Endothelial cell of umbilical vein (primary cell): ENCODE measurements at regions of chr19 and their contacts with region 1.

Region 1: GRCh38 chr19:1173845-1174809 is at the start of gene SBNO2:
- DNase-seq: peak; percentile 89
- H3K4me3 ChIP-seq: peak within 1 kb of the TSS; percentile 68 to 95 (median 73)
- H3K27ac ChIP-seq: peak within 1 kb of the TSS; percentile 42
- H3K4me1 ChIP-seq: peaks cover 12% of the 10 kb centered on the region
- H3K27me3 ChIP-seq: no peaks in the 10 kb centered on the region
- CTCF ChIP-seq: no peak
- POLR2A ChIP-seq: peak; percentile 95
- total RNA-seq, gene SBNO2: 63.8 and 65.7 TPM in 2 replicates

Region 2: GRCh38 chr19:984165-984967 is 189.8 kb before region 1 on chr19 and contains the start of gene WDR18:
- CTCF ChIA-PET with region 1: no interaction called
- POLR2A ChIA-PET with region 1: no interaction called
- dilution Hi-C with region 1: no loop called
- intact Hi-C with region 1: no loop called
- DNase-seq: peak; percentile 85
- H3K4me3 ChIP-seq: peak within 1 kb of the TSS; percentile 79 to 95 (median 83)
- H3K27ac ChIP-seq: peak within 1 kb of the TSS; percentile 79
- H3K4me1 ChIP-seq: peaks cover 11% of the 10 kb centered on the region
- H3K27me3 ChIP-seq: no peaks in the 10 kb centered on the region
- CTCF ChIP-seq: peak in 1 of 2 donors; percentile 19
- POLR2A ChIP-seq: peak; percentile 67
- total RNA-seq, gene WDR18: 54.8 and 74.7 TPM in 2 replicates

Region 3: DNA sequence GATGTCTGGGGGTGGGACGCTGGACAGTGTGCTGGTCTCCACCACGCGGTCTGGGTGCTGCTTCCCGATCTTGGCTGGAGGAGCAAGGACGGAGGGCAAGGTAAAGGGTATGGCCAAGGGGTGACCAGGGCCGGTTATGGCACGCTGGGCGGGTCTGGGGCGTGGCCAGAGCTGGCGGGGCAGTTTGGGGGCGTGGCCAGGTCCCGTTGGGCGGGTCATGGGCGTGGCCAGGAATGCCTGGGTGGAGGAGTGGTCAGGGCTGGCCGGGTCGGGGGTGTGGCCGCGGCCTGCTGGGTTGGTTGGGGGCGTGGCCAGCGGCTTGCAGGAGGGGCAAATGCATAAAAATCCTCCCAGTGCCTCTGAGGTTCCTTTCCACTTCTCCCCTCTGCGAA is 51.2 kb before region 1 on chr19:
- CTCF ChIA-PET with region 1: no interaction called
- POLR2A ChIA-PET with region 1: no interaction called
- dilution Hi-C with region 1: no loop called
- intact Hi-C with region 1: loop called (anchors 2 kb)
- DNase-seq: peak; percentile 69
- H3K4me3 ChIP-seq: no peak overlapping the region
- H3K27ac ChIP-seq: no peak overlapping the region
- H3K4me1 ChIP-seq: peaks cover 15% of the 10 kb centered on the region
- H3K27me3 ChIP-seq: no peaks in the 10 kb centered on the region
- CTCF ChIP-seq: no peak
- POLR2A ChIP-seq: no peak

Region 4: DNA sequence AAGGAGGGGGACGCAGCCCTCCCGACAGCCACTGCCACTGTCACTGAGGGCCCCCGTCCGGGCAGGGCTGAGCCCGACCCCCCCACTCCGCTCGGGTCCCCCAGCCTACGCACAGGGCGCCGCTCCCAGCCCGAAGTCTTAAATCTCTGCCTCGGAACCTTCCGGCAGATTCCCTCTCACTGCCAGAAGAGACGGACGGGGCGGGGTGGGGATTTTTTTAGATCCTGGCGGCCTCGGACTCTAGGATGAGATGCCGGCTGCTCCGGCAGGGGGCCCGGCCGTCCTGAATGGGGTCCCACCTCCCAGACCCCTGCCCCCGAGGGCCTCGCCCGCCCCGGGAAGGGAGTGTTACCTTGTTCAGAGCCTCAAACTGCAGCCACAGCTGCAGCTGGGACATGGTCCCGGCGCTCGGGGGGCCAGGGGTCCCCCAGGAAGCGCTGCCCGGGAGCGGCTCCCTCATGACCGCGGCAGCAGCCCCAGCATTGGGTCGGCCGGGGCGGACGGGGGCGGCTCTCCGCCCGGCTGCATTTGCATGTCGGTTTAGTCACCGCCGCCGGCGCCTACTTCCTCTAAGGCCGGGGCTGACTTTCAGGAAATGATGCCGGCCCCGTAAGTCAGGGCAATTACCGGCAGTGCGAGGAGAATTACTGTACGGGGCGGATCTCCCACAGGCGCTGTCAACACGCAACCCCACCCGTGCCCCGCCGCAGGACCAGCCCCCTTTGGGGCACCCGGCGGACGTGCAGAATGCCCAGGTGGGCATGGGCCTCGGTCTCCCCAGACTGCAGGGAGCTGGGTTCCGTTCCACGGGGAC is 42.2 kb before region 1 on chr19:
- CTCF ChIA-PET with region 1: interaction called, 3 read pairs
- POLR2A ChIA-PET with region 1: no interaction called
- dilution Hi-C with region 1: no loop called
- intact Hi-C with region 1: loop called (anchors 2 kb)
- DNase-seq: peak; percentile 90
- H3K4me3 ChIP-seq: peak overlapping the region; percentile 64 to 81 (median 79)
- H3K27ac ChIP-seq: peak overlapping the region; percentile 92
- H3K4me1 ChIP-seq: peaks cover 20% of the 10 kb centered on the region
- H3K27me3 ChIP-seq: no peaks in the 10 kb centered on the region
- CTCF ChIP-seq: peak; percentile 6 to 13
- POLR2A ChIP-seq: peak; percentile 82

Region 5: DNA sequence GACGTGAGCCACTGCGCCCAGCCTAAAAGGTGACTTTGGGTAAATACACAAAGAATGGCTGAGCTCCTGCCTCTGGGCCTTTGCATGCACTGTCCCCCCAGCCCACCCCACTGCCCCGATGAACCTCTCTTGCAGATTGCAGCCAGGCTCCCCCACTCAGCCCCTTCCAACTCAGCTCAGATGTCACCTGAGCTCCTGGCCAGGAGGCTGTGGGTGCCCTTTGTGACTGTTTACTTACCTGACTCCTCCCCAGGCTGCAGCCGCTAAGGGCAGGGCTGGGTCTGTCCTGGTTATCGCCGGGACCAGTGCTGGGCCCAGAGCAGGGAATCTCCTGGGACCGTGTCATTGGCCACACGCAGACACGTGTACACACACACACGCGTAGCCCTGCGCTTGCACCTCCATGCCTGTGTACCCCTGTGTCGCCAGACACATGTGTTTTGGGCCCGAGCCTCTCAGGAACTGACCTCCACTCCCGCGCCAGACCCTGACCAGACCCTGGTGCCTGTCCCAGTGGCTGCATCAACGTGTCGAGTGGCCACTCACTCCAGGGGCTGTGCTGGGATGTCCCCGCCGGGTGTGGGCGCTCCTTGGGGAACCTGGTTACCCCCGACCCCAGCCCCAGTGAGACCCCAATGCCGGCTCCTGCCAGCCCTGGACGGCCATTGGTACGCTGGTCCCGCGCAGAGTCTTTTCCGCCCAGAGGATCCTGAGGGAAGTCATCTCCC is 130.2 kb after region 1 on chr19:
- CTCF ChIA-PET with region 1: no interaction called
- POLR2A ChIA-PET with region 1: no interaction called
- dilution Hi-C with region 1: no loop called
- intact Hi-C with region 1: no loop called
- DNase-seq: no peak
- H3K4me3 ChIP-seq: no peak overlapping the region
- H3K27ac ChIP-seq: no peak overlapping the region
- H3K4me1 ChIP-seq: no peaks in the 10 kb centered on the region
- H3K27me3 ChIP-seq: no peaks in the 10 kb centered on the region
- CTCF ChIP-seq: no peak
- POLR2A ChIP-seq: no peak